ENCODE measurements at regions of chr10 and their contacts with region 1.

Region 1: DNA sequence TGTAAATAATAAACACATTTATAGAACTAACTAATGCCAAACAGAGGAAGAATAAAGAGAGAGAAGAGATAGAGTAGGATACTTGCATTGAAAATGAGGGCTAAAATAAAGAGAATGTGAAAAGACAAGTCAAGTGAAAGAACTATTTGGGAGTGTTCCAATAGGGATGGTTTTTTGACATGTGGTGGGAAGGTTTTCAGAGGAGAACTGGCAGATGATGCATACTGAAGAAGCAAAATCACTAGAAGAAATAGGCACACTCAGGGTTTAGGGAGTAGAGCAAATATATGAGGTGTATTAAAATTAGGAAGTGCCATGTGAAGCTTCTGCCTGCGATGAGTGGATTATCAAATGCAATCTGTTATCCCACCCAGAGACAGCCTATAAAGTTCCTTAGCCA is 744.8 kb downstream of the REEP3 start:
- DNase-seq: no peak

Region 2: GRCh38 chr10:64798297-64798696 is 532.3 kb after region 1 on chr10:
- intact Hi-C with region 1: loop called in 1 of 2 experiments (anchors 5 kb)
- DNase-seq: no peak

Measured in posterior vena cava (tissue), 2 donors.